Caco-2 (cell line): ENCODE measurements at regions of chr12 and their contacts with region 1.

Region 1: GRCh38 chr12:101051901-101052550 is 158.0 kb downstream of the SLC5A8 start:
- DNase-seq: peak; percentile 79 to 87
- H3K4me3 ChIP-seq: no peak overlapping the region
- H3K4me3 Mint-ChIP-seq: peak overlapping the region; percentile 26
- H3K27ac Mint-ChIP-seq: peak overlapping the region; percentile 74
- H3K4me1 ChIP-seq: peaks cover 29% of the 10 kb centered on the region
- H3K4me1 Mint-ChIP-seq: peaks cover 22% of the 10 kb centered on the region
- H3K27me3 ChIP-seq: no peaks in the 10 kb centered on the region
- H3K27me3 Mint-ChIP-seq: no peaks in the 10 kb centered on the region
- CTCF ChIP-seq: no peak

Region 2: DNA sequence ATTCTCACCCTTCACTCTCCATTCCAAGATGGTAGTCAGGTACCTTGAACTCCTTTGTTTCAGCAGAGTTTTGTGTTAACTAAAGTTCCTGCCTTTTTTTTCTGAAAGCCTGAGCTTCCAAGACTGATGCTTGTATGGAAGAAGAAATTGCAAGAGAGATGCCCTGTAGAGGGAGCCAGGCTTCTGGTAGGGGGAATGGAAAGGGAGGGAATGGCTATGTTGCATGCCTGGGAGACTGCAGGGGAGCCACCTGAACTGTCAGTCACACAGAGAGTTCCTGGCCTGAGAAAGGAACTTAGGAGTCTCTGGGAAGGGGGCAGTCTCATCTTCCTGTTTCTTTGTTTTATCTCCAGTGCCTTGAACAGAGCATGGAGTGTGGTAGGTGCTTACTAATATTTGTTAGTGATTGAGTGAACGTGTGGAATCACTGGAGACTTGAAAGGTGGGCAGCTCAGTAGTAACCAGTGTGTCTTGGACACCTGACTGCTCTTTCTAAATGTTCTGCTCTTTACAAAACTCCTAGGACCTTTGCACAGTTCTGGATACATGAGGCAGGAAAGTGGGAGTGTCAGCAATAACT is 125.3 kb before region 1 on chr12:
- CTCF ChIA-PET with region 1: no interaction called
- POLR2A ChIA-PET with region 1: no interaction called
- intact Hi-C with region 1: loop called (anchors 10 kb)
- DNase-seq: peak; percentile 55 to 61
- H3K4me3 ChIP-seq: no peak overlapping the region
- H3K4me3 Mint-ChIP-seq: no peak overlapping the region
- H3K27ac Mint-ChIP-seq: no peak overlapping the region
- H3K4me1 ChIP-seq: no peaks in the 10 kb centered on the region
- H3K4me1 Mint-ChIP-seq: no peaks in the 10 kb centered on the region
- H3K27me3 ChIP-seq: no peaks in the 10 kb centered on the region
- H3K27me3 Mint-ChIP-seq: peaks cover 5% of the 10 kb centered on the region
- CTCF ChIP-seq: peak; percentile 43 to 71

Region 3: DNA sequence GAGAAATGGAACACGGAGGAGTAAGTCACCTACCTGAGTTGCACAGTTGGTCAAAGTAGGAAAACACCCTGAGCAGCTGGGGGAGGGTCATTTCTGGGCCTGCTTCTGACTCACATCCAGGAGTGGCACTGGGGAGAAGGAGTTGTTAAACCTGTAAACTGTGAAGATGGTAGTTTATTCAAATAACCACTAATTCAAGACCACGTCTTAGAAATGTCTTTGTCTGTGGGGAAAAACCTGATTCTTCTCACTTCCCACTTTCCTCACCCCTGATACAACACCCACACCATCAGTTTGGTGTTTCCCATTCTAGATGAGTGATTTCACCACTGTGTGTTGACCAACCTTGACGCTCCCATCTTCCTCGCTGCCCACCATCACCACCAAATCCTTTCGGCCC is 50.4 kb before region 1 on chr12:
- CTCF ChIA-PET with region 1: no interaction called
- POLR2A ChIA-PET with region 1: no interaction called
- intact Hi-C with region 1: loop called (anchors 5 kb)
- DNase-seq: no peak
- H3K4me3 ChIP-seq: no peak overlapping the region
- H3K4me3 Mint-ChIP-seq: no peak overlapping the region
- H3K27ac Mint-ChIP-seq: no peak overlapping the region
- H3K4me1 ChIP-seq: no peaks in the 10 kb centered on the region
- H3K4me1 Mint-ChIP-seq: no peaks in the 10 kb centered on the region
- H3K27me3 ChIP-seq: no peaks in the 10 kb centered on the region
- H3K27me3 Mint-ChIP-seq: no peaks in the 10 kb centered on the region
- CTCF ChIP-seq: no peak

Region 4: GRCh38 chr12:101040936-101041335 is 11.1 kb before region 1 on chr12:
- CTCF ChIA-PET with region 1: no interaction called
- POLR2A ChIA-PET with region 1: no interaction called
- intact Hi-C with region 1: loop called (anchors 1 kb)
- DNase-seq: no peak
- H3K4me3 ChIP-seq: no peak overlapping the region
- H3K4me3 Mint-ChIP-seq: no peak overlapping the region
- H3K27ac Mint-ChIP-seq: no peak overlapping the region
- H3K4me1 ChIP-seq: peaks cover 18% of the 10 kb centered on the region
- H3K4me1 Mint-ChIP-seq: no peaks in the 10 kb centered on the region
- H3K27me3 ChIP-seq: no peaks in the 10 kb centered on the region
- H3K27me3 Mint-ChIP-seq: no peaks in the 10 kb centered on the region
- CTCF ChIP-seq: no peak

Region 5: DNA sequence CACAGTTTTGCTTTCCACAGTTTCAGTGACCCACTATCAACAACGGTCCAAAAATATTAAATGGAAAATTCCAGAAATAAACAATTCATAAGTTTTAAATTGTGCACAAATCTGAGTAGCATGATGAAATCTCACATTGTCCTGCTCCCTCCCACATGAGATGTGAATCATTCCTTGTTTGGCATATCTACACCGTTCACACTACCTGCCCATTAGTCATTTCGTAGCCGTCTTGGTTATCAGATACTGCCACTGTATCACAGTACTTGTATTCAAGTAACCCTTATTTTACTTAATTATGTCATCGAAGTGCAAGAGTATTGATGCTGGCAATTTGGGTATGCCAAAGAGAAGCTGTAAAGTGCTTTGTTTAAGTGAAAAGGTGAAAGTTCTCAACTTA is 12.7 kb after region 1 on chr12:
- CTCF ChIA-PET with region 1: no interaction called
- POLR2A ChIA-PET with region 1: no interaction called
- intact Hi-C with region 1: no loop called
- DNase-seq: no peak
- H3K4me3 ChIP-seq: no peak overlapping the region
- H3K4me3 Mint-ChIP-seq: no peak overlapping the region
- H3K27ac Mint-ChIP-seq: no peak overlapping the region
- H3K4me1 ChIP-seq: no peaks in the 10 kb centered on the region
- H3K4me1 Mint-ChIP-seq: no peaks in the 10 kb centered on the region
- H3K27me3 ChIP-seq: no peaks in the 10 kb centered on the region
- H3K27me3 Mint-ChIP-seq: peaks cover 4% of the 10 kb centered on the region
- CTCF ChIP-seq: no peak